ENCODE measurements at regions of chr1 and their contacts with region 1.

Region 1: GRCh38 chr1:150464422-150464826 is 22.8 kb upstream of the TARS2 start:
- DNase-seq: peak; percentile 66 to 77 (median 70)
- H3K4me3 ChIP-seq: no peak overlapping the region
- H3K4me3 Mint-ChIP-seq: no peak overlapping the region
- H3K27ac ChIP-seq: no peak overlapping the region
- H3K27ac Mint-ChIP-seq: peak overlapping the region in 3 of 7 donors; percentile 0 to 88 (median 38)
- H3K4me1 ChIP-seq: no peaks in the 10 kb centered on the region
- H3K4me1 Mint-ChIP-seq: peaks cover 0 to 6% (median 4%) of the 10 kb centered on the region in 4 donors
- H3K27me3 ChIP-seq: no peaks in the 10 kb centered on the region
- H3K27me3 Mint-ChIP-seq: no peaks in the 10 kb centered on the region

Region 2: DNA sequence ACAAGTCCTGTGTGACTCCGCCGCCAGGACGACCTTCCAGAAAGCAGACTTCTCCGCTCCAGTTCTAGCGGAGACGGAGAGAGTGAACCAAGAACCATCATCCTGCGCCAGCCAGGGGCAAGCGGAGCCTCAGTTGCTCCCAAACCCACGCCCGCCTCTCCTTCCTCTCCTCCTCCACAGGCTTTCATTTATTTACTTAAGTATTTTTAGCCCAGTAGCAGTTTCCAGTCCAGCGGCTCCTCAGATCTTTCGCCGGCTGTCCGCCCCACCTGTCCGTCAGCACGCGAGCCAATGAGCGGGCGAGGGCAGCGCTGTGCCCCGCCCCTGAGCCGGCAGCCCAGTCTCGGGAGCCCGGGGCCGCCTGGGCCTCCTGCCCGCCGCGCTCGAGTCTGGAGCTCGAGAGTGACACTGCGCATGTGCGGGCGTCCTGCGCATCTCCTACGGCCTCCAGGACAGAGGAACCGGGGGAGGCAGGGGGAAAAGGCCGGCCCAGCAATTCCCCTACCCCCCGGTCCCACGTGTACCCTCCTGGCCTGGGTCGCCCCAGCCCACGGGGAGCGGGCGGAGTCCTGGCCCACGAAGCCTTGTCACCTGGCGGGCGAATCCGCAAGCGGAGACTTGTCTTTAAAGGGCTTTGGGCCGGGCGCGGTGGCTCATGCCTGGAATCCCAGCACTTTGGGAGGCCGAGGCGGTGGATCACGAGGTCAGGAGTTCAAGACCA is 51.1 kb after region 1 on chr1 and contains the start of gene FALEC:
- CTCF ChIA-PET with region 1: interaction called, 7 read pairs
- POLR2A ChIA-PET with region 1: no interaction called
- intact Hi-C with region 1: loop called (anchors 5 kb)
- DNase-seq: peak; percentile 87 to 91 (median 89)
- H3K4me3 ChIP-seq: peak within 1 kb of the TSS; percentile 69 to 73
- H3K4me3 Mint-ChIP-seq: peak within 1 kb of the TSS; percentile 83 to 94 (median 92)
- H3K27ac ChIP-seq: peak within 1 kb of the TSS; percentile 53
- H3K27ac Mint-ChIP-seq: peak within 1 kb of the TSS; percentile 61 to 93 (median 89)
- H3K4me1 ChIP-seq: peaks cover 11% of the 10 kb centered on the region
- H3K4me1 Mint-ChIP-seq: peaks cover 8 to 20% (median 12%) of the 10 kb centered on the region in 4 donors
- H3K27me3 ChIP-seq: no peaks in the 10 kb centered on the region
- H3K27me3 Mint-ChIP-seq: no peaks in the 10 kb centered on the region
- total RNA-seq, gene FALEC: 0.64 TPM in 1 of 2 experiments, not detected in the other

Region 3: GRCh38 chr1:150532868-150533302 is 68.5 kb after region 1 on chr1:
- CTCF ChIA-PET with region 1: interaction called, 11 read pairs
- POLR2A ChIA-PET with region 1: no interaction called
- intact Hi-C with region 1: loop called (anchors 1 kb)
- DNase-seq: no peak
- H3K4me3 ChIP-seq: no peak overlapping the region
- H3K4me3 Mint-ChIP-seq: no peak overlapping the region
- H3K27ac ChIP-seq: no peak overlapping the region
- H3K27ac Mint-ChIP-seq: peak overlapping the region in 2 of 7 donors; percentile 31 to 42
- H3K4me1 ChIP-seq: no peaks in the 10 kb centered on the region
- H3K4me1 Mint-ChIP-seq: peaks cover 0 to 6% (median 4%) of the 10 kb centered on the region in 4 donors
- H3K27me3 ChIP-seq: no peaks in the 10 kb centered on the region
- H3K27me3 Mint-ChIP-seq: peaks cover 0 to 6% of the 10 kb centered on the region in 2 donors

Region 4: GRCh38 chr1:150621497-150622302 is 157.3 kb after region 1 on chr1:
- CTCF ChIA-PET with region 1: no interaction called
- POLR2A ChIA-PET with region 1: no interaction called
- intact Hi-C with region 1: loop called (anchors 5 kb)
- DNase-seq: peak; percentile 66 to 71 (median 69)
- H3K4me3 ChIP-seq: no peak overlapping the region
- H3K4me3 Mint-ChIP-seq: peak overlapping the region in 7 of 8 donors; percentile 8 to 61 (median 35)
- H3K27ac ChIP-seq: peak overlapping the region; percentile 53
- H3K27ac Mint-ChIP-seq: peak overlapping the region; percentile 82 to 95 (median 91)
- H3K4me1 ChIP-seq: peaks cover 38% of the 10 kb centered on the region
- H3K4me1 Mint-ChIP-seq: peaks cover 32 to 64% (median 51%) of the 10 kb centered on the region in 4 donors
- H3K27me3 ChIP-seq: no peaks in the 10 kb centered on the region
- H3K27me3 Mint-ChIP-seq: no peaks in the 10 kb centered on the region

Region 5: GRCh38 chr1:150979092-150980056 is 515.0 kb after region 1 on chr1:
- CTCF ChIA-PET with region 1: interaction called, 6 read pairs
- POLR2A ChIA-PET with region 1: no interaction called
- intact Hi-C with region 1: loop called (anchors 10 kb)
- DNase-seq: peak; percentile 83 to 87 (median 85)
- H3K4me3 ChIP-seq: peak overlapping the region in 1 of 2 donors; percentile 52
- H3K4me3 Mint-ChIP-seq: peak overlapping the region in 4 of 8 donors; percentile 29 to 59 (median 41)
- H3K27ac ChIP-seq: peak overlapping the region; percentile 11
- H3K27ac Mint-ChIP-seq: peak overlapping the region in 6 of 7 donors; percentile 48 to 83 (median 64)
- H3K4me1 ChIP-seq: peaks cover 39% of the 10 kb centered on the region
- H3K4me1 Mint-ChIP-seq: peaks cover 20 to 44% (median 31%) of the 10 kb centered on the region in 4 donors
- H3K27me3 ChIP-seq: no peaks in the 10 kb centered on the region
- H3K27me3 Mint-ChIP-seq: no peaks in the 10 kb centered on the region

Measured in CD4-positive, alpha-beta memory T cell (primary cell).